ENCODE measurements at regions of chr10 and their contacts with region 1.

Region 1: GRCh38 chr10:60964257-60965235 is 20.6 kb upstream of the RHOBTB1 start:
- DNase-seq: peak in 7 of 9 donors; percentile 9 to 47 (median 29)
- ATAC-seq: peak; percentile 74
- H3K4me3 ChIP-seq: no peak overlapping the region
- H3K4me3 Mint-ChIP-seq: no peak overlapping the region
- H3K27ac ChIP-seq: no peak overlapping the region
- H3K27ac Mint-ChIP-seq: no peak overlapping the region
- H3K4me1 ChIP-seq: no peaks in the 10 kb centered on the region
- H3K4me1 Mint-ChIP-seq: peaks cover 0 to 18% (median 0%) of the 10 kb centered on the region in 7 donors
- H3K27me3 ChIP-seq: no peaks in the 10 kb centered on the region
- H3K27me3 Mint-ChIP-seq: peaks cover 24 to 30% (median 26%) of the 10 kb centered on the region in 5 donors

Region 2: DNA sequence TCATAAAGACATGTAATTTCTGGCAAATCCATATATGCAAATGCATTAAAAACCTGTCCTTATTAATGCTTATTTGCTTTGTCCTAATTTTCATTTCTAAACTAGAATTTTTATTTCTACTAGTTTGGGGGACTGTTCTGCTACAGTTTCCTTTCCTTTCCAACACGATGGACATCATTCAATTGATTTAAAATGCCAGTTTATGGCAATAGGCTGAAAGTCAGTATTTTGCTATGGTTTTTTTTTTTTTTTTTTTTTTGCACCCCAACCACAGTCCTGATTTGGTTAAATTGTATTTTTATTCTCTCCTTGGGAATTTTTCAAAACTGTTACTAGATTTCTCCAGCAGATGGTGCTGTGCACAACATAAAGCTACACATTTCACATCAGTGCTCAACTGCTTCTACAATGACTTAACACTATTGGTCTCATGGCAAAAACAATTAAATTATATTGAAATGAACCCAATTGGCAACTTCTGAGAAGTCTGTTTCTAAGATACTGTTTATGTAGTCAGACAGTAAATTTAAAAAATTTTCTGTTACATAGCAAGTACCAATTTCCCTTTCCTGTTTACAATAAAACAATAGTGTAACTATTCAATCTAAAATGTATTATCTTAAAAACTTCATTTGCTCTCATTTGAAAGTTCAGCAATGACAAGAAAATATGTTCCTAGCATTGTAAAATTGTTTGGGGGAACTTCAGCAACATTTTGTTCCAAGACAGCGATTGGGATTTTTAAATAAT is 864.4 kb before region 1 on chr10:
- CTCF ChIA-PET with region 1: no interaction called
- POLR2A ChIA-PET with region 1: no interaction called
- intact Hi-C with region 1: loop called in 1 of 2 experiments (anchors 1 kb)
- DNase-seq: peak in 6 of 9 donors; percentile 14 to 43 (median 31)
- ATAC-seq: peak; percentile 69
- H3K4me3 ChIP-seq: no peak overlapping the region
- H3K4me3 Mint-ChIP-seq: no peak overlapping the region
- H3K27ac ChIP-seq: no peak overlapping the region
- H3K27ac Mint-ChIP-seq: no peak overlapping the region
- H3K4me1 ChIP-seq: no peaks in the 10 kb centered on the region
- H3K4me1 Mint-ChIP-seq: no peaks in the 10 kb centered on the region
- H3K27me3 ChIP-seq: no peaks in the 10 kb centered on the region
- H3K27me3 Mint-ChIP-seq: no peaks in the 10 kb centered on the region

Region 3: GRCh38 chr10:60549686-60550085 is 414.9 kb before region 1 on chr10:
- CTCF ChIA-PET with region 1: no interaction called
- POLR2A ChIA-PET with region 1: no interaction called
- intact Hi-C with region 1: loop called in 1 of 2 experiments (anchors 5 kb)
- DNase-seq: peak in 2 of 9 donors; percentile 11 to 25
- ATAC-seq: no peak
- H3K4me3 ChIP-seq: no peak overlapping the region
- H3K4me3 Mint-ChIP-seq: no peak overlapping the region
- H3K27ac ChIP-seq: no peak overlapping the region
- H3K27ac Mint-ChIP-seq: no peak overlapping the region
- H3K4me1 ChIP-seq: no peaks in the 10 kb centered on the region
- H3K4me1 Mint-ChIP-seq: peaks cover 0 to 8% (median 0%) of the 10 kb centered on the region in 7 donors
- H3K27me3 ChIP-seq: no peaks in the 10 kb centered on the region
- H3K27me3 Mint-ChIP-seq: no peaks in the 10 kb centered on the region

Region 4: GRCh38 chr10:60883187-60883586 is 81.4 kb before region 1 on chr10:
- CTCF ChIA-PET with region 1: no interaction called
- POLR2A ChIA-PET with region 1: no interaction called
- intact Hi-C with region 1: loop called in 1 of 2 experiments (anchors 1 kb)
- DNase-seq: no peak
- ATAC-seq: no peak
- H3K4me3 ChIP-seq: no peak overlapping the region
- H3K4me3 Mint-ChIP-seq: no peak overlapping the region
- H3K27ac ChIP-seq: no peak overlapping the region
- H3K27ac Mint-ChIP-seq: no peak overlapping the region
- H3K4me1 ChIP-seq: no peaks in the 10 kb centered on the region
- H3K4me1 Mint-ChIP-seq: no peaks in the 10 kb centered on the region
- H3K27me3 ChIP-seq: no peaks in the 10 kb centered on the region
- H3K27me3 Mint-ChIP-seq: peaks cover 0 to 11% (median 2%) of the 10 kb centered on the region in 5 donors

Region 5: GRCh38 chr10:61869774-61870525 is 905.4 kb after region 1 on chr10:
- CTCF ChIA-PET with region 1: no interaction called
- POLR2A ChIA-PET with region 1: no interaction called
- intact Hi-C with region 1: loop called in 1 of 2 experiments (anchors 5 kb)
- DNase-seq: no peak
- ATAC-seq: no peak
- H3K4me3 ChIP-seq: no peak overlapping the region
- H3K4me3 Mint-ChIP-seq: no peak overlapping the region
- H3K27ac ChIP-seq: no peak overlapping the region
- H3K27ac Mint-ChIP-seq: no peak overlapping the region
- H3K4me1 ChIP-seq: no peaks in the 10 kb centered on the region
- H3K4me1 Mint-ChIP-seq: peaks cover 0 to 10% (median 4%) of the 10 kb centered on the region in 7 donors
- H3K27me3 ChIP-seq: peaks cover 0 to 3% of the 10 kb centered on the region in 2 donors
- H3K27me3 Mint-ChIP-seq: peaks cover 0 to 15% (median 3%) of the 10 kb centered on the region in 5 donors